ENCODE measurements at regions of chr7 and their contacts with region 1.

Region 1: GRCh38 chr7:66493235-66494181 is 135.2 kb upstream of the KCTD7 start:
- DNase-seq: peak; percentile 94
- ATAC-seq: peak; percentile 94
- H3K4me3 ChIP-seq: peak overlapping the region; percentile 69 to 89 (median 79)
- H3K27ac ChIP-seq: peak overlapping the region; percentile 88
- H3K4me1 ChIP-seq: peaks cover 53% of the 10 kb centered on the region
- H3K27me3 ChIP-seq: no peaks in the 10 kb centered on the region
- CTCF ChIP-seq: peak; percentile 50
- EP300 ChIP-seq: 0 out of 4 replicates have a peak, but pooled peaks of 1 of the 2 experiments have one; percentile 24
- POLR2A ChIP-seq: peak; percentile 92 to 96
- RAD21 ChIP-seq: peak; percentile 61; the same call in 1 of the 2 replicates

Region 2: GRCh38 chr7:66114793-66115649 is 378.5 kb before region 1 on chr7 and contains the start of gene CRCP:
- CTCF ChIA-PET with region 1: no interaction called
- POLR2A ChIA-PET with region 1: interaction called, 11 read pairs
- in situ Hi-C with region 1: no loop called
- intact Hi-C with region 1: no loop called
- DNase-seq: peak; percentile 87
- ATAC-seq: peak; percentile 89
- H3K4me3 ChIP-seq: peak within 1 kb of the TSS; percentile 77 to 89 (median 77)
- H3K27ac ChIP-seq: peak within 1 kb of the TSS; percentile 98
- H3K4me1 ChIP-seq: peaks cover 56% of the 10 kb centered on the region
- H3K27me3 ChIP-seq: no peaks in the 10 kb centered on the region
- CTCF ChIP-seq: peak; percentile 60
- EP300 ChIP-seq: no peak
- POLR2A ChIP-seq: peak; percentile 74 to 83
- RAD21 ChIP-seq: no peak; the same call in 1 of the 2 replicates
- total RNA-seq, gene CRCP: 31.0 and 41.1 TPM in 2 replicates

Region 3: DNA sequence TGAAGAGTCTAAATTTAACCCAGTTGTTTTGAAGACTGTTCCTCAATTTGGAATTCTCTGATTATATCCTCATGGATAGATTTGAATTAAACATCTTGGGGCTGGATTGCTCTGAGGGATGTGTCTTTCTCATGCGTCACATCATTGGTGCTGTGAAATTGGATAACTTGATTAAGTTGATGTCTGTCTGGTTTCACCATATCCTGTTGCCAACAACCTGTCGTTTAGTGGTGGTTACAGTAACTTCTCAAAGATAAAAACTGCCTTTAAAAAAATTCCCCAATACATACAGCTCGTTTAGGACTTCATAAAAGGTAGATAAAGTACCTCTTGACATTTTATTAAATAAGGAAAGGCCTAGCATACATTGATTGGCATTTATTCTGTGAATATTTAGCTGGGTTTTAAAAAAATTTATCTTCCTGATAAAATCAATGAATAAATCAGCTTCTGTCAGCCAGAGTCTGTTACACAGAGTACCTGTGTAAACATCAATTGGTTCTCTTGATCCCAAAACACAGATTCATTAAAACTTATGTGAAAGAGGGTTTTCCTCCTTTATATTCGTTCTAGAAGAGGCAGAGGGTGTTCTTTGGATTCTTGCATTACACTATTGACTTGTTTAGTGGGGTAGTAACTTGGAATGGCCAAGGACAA is 368.3 kb before region 1 on chr7:
- CTCF ChIA-PET with region 1: no interaction called
- POLR2A ChIA-PET with region 1: no interaction called
- in situ Hi-C with region 1: no loop called
- intact Hi-C with region 1: no loop called
- DNase-seq: no peak
- ATAC-seq: no peak
- H3K4me3 ChIP-seq: no peak overlapping the region
- H3K27ac ChIP-seq: peak overlapping the region; percentile 46
- H3K4me1 ChIP-seq: peaks cover 58% of the 10 kb centered on the region
- H3K27me3 ChIP-seq: no peaks in the 10 kb centered on the region
- CTCF ChIP-seq: no peak
- EP300 ChIP-seq: no peak
- POLR2A ChIP-seq: no peak
- RAD21 ChIP-seq: no peak

Region 4: GRCh38 chr7:66423729-66424128 is 69.8 kb before region 1 on chr7:
- CTCF ChIA-PET with region 1: no interaction called
- POLR2A ChIA-PET with region 1: interaction called, 5 read pairs
- in situ Hi-C with region 1: no loop called
- intact Hi-C with region 1: loop called (anchors 5 kb)
- DNase-seq: no peak
- ATAC-seq: no peak
- H3K4me3 ChIP-seq: no peak overlapping the region
- H3K27ac ChIP-seq: no peak overlapping the region
- H3K4me1 ChIP-seq: peaks cover 33% of the 10 kb centered on the region
- H3K27me3 ChIP-seq: no peaks in the 10 kb centered on the region
- CTCF ChIP-seq: no peak
- EP300 ChIP-seq: no peak
- POLR2A ChIP-seq: no peak
- RAD21 ChIP-seq: no peak

Region 5: GRCh38 chr7:66517212-66517909 is 23.9 kb after region 1 on chr7:
- CTCF ChIA-PET with region 1: no interaction called
- POLR2A ChIA-PET with region 1: interaction called, 28 read pairs
- in situ Hi-C with region 1: no loop called
- intact Hi-C with region 1: no loop called
- DNase-seq: no peak
- ATAC-seq: peak; percentile 8
- H3K4me3 ChIP-seq: peak overlapping the region; percentile 28 to 60 (median 44); a peak in 5 of 6 replicates
- H3K27ac ChIP-seq: no peak overlapping the region
- H3K4me1 ChIP-seq: peaks cover 52% of the 10 kb centered on the region
- H3K27me3 ChIP-seq: no peaks in the 10 kb centered on the region
- CTCF ChIP-seq: peak; percentile 37; the same call in 1 of the 2 replicates
- EP300 ChIP-seq: no peak
- POLR2A ChIP-seq: no peak
- RAD21 ChIP-seq: no peak

Region 6: DNA sequence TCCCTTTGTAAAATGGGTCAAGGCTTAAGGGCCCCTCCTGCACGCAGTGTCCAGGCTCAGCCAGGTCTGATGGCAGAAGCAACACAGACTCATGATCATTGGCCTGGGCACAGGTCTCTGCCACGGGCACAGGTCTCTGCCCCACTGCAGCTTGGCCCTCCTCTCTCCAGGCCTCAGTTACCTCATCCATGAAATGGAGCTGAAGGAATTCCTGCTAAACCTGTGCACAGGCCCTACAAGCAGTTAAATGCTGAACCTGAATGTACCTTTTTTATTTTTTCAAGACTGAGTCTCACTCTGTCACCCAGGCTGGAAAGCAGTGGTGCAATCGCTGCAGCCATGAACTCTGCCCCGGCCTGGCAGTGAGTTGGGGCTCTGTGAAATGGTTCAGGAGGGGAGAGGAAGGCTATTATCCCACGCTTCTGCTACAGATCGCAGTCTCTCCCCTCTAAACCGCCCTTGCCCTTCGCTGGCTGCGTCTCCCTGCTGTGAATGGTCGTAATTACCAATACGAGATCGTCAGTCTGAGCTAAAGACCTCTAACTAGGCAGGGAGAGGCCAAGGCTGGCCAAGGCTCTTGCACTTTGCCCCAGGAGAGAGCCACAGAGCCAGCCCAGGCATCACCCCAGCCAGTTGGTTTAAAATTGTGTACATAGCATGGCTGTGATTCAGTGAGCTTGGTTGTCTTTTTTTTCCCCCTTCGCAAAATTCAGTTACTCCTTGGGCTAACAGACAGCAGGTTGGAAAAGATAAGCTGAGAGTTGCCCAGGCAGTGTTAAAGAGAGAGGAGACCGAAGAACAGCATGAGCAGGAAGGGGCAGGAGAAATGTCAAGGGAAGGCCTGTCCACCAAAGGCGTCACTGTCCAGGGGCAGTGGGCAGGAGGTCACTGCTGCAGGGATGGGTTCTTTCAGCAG is 42.2 kb after region 1 on chr7:
- CTCF ChIA-PET with region 1: no interaction called
- POLR2A ChIA-PET with region 1: interaction called, 28 read pairs
- in situ Hi-C with region 1: no loop called
- intact Hi-C with region 1: no loop called
- DNase-seq: peak; percentile 84
- ATAC-seq: peak; percentile 89
- H3K4me3 ChIP-seq: peak overlapping the region in 2 of 3 experiments; percentile 39 to 57; a peak in 4 of 6 replicates
- H3K27ac ChIP-seq: peak overlapping the region; percentile 93
- H3K4me1 ChIP-seq: peaks cover 67% of the 10 kb centered on the region
- H3K27me3 ChIP-seq: no peaks in the 10 kb centered on the region
- CTCF ChIP-seq: no peak
- EP300 ChIP-seq: peak in 1 of 2 experiments; percentile 6; a peak in 2 of 4 replicates
- POLR2A ChIP-seq: peak in 1 of 2 experiments; percentile 48; a peak in 2 of 4 replicates
- RAD21 ChIP-seq: no peak

Region 7: GRCh38 chr7:66628361-66629140 is 135.0 kb after region 1 on chr7 and contains the start of gene KCTD7:
- CTCF ChIA-PET with region 1: no interaction called
- POLR2A ChIA-PET with region 1: no interaction called
- in situ Hi-C with region 1: no loop called
- intact Hi-C with region 1: no loop called
- DNase-seq: peak; percentile 91
- ATAC-seq: peak; percentile 95
- H3K4me3 ChIP-seq: peak within 1 kb of the TSS; percentile 69 to 95 (median 81)
- H3K27ac ChIP-seq: peak within 1 kb of the TSS; percentile 87
- H3K4me1 ChIP-seq: peaks cover 43% of the 10 kb centered on the region
- H3K27me3 ChIP-seq: no peaks in the 10 kb centered on the region
- CTCF ChIP-seq: peak; percentile 30
- EP300 ChIP-seq: no peak
- POLR2A ChIP-seq: peak; percentile 96 to 99
- RAD21 ChIP-seq: peak; percentile 16; the same call in 1 of the 2 replicates
- total RNA-seq, gene KCTD7: 7.3 and 7.7 TPM in 2 replicates

Region 8: GRCh38 chr7:66720561-66720960 is 227.1 kb after region 1 on chr7:
- CTCF ChIA-PET with region 1: no interaction called
- POLR2A ChIA-PET with region 1: no interaction called
- in situ Hi-C with region 1: no loop called
- intact Hi-C with region 1: no loop called
- DNase-seq: no peak
- ATAC-seq: no peak
- H3K4me3 ChIP-seq: no peak overlapping the region
- H3K27ac ChIP-seq: no peak overlapping the region
- H3K4me1 ChIP-seq: peaks cover 20% of the 10 kb centered on the region
- H3K27me3 ChIP-seq: no peaks in the 10 kb centered on the region
- CTCF ChIP-seq: no peak
- EP300 ChIP-seq: no peak
- POLR2A ChIP-seq: no peak
- RAD21 ChIP-seq: no peak